Sigmoid colon (tissue), 7 donors: ENCODE measurements at regions of chr3 and their contacts with region 1.

Region 1: GRCh38 chr3:25044762-25045710 is 383.0 kb upstream of the RARB start:
- DNase-seq: no peak
- H3K4me3 ChIP-seq: no peak overlapping the region
- H3K27ac ChIP-seq: peak overlapping the region in 3 of 4 donors; percentile 42 to 67 (median 49)
- H3K4me1 ChIP-seq: peaks cover 0 to 47% (median 29%) of the 10 kb centered on the region in 4 donors
- H3K27me3 ChIP-seq: no peaks in the 10 kb centered on the region
- CTCF ChIP-seq: no peak
- EP300 ChIP-seq: no peak
- POLR2A ChIP-seq: no peak

Region 2: DNA sequence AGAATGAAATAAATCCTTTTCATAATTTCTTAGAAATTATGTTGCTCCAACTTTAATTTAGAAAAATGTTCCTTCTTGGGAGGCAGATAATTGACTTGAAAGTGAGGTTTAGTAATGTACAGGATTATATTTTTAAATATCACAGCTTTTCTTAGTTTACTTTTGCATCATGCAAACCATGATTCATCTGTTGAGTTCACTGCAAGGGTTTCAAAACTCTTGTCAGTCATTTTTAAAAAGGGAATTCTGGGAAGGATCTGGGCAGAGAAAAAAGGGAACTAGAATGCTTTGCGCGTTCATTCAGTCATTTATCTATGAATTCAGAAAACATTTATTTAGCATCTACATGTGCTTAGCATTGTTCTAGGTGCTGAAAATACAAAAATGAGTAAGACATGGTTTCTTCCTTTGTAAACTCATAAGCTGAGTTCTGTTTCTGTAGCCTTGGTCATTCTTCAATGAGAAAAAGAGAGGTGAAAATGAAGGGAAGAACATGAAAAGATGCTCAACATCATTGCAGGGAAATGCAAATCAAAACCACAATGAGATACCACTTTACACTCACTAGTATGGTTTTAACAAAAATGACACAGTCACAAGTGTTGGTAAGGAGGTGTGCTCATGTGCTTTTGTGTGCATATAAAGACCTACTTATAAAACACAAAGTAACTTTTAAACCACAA is 890.9 kb before region 1 on chr3:
- intact Hi-C with region 1: no loop called
- DNase-seq: no peak
- H3K4me3 ChIP-seq: no peak overlapping the region
- H3K27ac ChIP-seq: no peak overlapping the region
- H3K4me1 ChIP-seq: peaks cover 0 to 13% (median 6%) of the 10 kb centered on the region in 4 donors
- H3K27me3 ChIP-seq: no peaks in the 10 kb centered on the region
- CTCF ChIP-seq: no peak
- EP300 ChIP-seq: no peak
- POLR2A ChIP-seq: no peak

Region 3: GRCh38 chr3:25145176-25145575 is 100.1 kb after region 1 on chr3:
- intact Hi-C with region 1: loop called (anchors 5 kb)
- DNase-seq: no peak
- H3K4me3 ChIP-seq: no peak overlapping the region
- H3K27ac ChIP-seq: no peak overlapping the region
- H3K4me1 ChIP-seq: peaks cover 0 to 10% (median 4%) of the 10 kb centered on the region in 4 donors
- H3K27me3 ChIP-seq: no peaks in the 10 kb centered on the region
- CTCF ChIP-seq: no peak
- EP300 ChIP-seq: no peak
- POLR2A ChIP-seq: no peak